ENCODE measurements at regions of chr5 and their contacts with region 1.

Region 1: DNA sequence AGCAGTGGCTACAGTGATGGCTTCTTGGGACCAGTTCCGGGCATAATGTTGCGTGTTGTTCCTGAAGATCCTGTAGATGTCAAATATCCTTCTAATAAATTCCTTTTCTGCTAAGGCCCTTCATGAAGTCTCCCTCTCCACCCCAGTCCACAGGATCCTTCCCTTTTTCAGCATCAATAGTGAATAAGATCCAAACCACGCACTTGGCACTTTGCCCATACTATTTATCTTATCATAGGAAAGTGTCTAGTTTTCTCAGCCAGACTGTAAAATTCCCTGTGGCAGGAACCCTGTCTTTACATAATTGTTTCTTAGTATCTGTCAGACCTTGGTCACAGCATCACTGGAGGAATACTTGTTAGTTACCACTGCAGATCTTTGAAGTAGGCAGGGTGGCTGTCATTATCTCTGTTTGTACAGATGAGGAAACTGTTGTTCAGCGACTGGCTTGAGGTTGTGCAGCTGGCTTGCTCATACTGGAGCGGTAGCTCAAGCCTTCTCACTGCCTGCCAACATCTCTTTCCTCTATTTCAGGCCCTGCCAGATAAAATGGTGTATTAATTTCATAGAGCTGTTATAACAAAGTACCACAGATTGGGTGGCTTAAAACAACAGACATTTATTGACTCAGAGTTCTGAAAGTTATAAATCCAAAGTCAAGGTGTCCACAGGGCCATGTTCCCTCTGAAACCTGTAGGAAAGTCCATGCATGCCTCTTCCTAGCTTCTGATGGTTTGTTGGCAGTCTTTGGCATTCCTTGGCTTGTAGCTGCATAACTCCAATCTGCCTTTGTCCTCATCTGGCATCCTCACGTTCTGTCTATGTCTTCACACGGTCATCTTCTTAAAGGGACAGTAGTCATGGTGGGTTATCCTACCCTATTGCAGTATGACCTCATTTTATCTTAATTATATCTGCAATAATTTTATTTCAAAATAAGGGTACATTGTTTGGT is 33.5 kb upstream of the APC start:
- DNase-seq: no peak
- H3K4me3 ChIP-seq: no peak overlapping the region
- H3K27ac ChIP-seq: peak overlapping the region; percentile 5 to 62 (median 50)
- H3K4me1 ChIP-seq: peaks cover 5 to 31% (median 25%) of the 10 kb centered on the region in 4 donors
- H3K27me3 ChIP-seq: no peaks in the 10 kb centered on the region
- CTCF ChIP-seq: no peak
- EP300 ChIP-seq: no peak
- POLR2A ChIP-seq: no peak

Region 2: GRCh38 chr5:112594095-112594850 is 109.9 kb before region 1 on chr5:
- intact Hi-C with region 1: no loop called
- DNase-seq: peak; percentile 72
- H3K4me3 ChIP-seq: no peak overlapping the region
- H3K27ac ChIP-seq: no peak overlapping the region
- H3K4me1 ChIP-seq: peaks cover 0 to 12% (median 8%) of the 10 kb centered on the region in 4 donors
- H3K27me3 ChIP-seq: no peaks in the 10 kb centered on the region
- CTCF ChIP-seq: no peak
- EP300 ChIP-seq: no peak
- POLR2A ChIP-seq: no peak

Region 3: GRCh38 chr5:112684737-112685136 is 19.4 kb before region 1 on chr5:
- intact Hi-C with region 1: loop called (anchors 2 kb)
- DNase-seq: no peak
- H3K4me3 ChIP-seq: no peak overlapping the region
- H3K27ac ChIP-seq: peak overlapping the region; percentile 29 to 84 (median 80)
- H3K4me1 ChIP-seq: peaks cover 18 to 62% (median 48%) of the 10 kb centered on the region in 4 donors
- H3K27me3 ChIP-seq: no peaks in the 10 kb centered on the region
- CTCF ChIP-seq: no peak
- EP300 ChIP-seq: no peak
- POLR2A ChIP-seq: no peak

Region 4: GRCh38 chr5:113059232-113060040 is 355.3 kb after region 1 on chr5:
- intact Hi-C with region 1: no loop called
- DNase-seq: no peak
- H3K4me3 ChIP-seq: no peak overlapping the region
- H3K27ac ChIP-seq: no peak overlapping the region
- H3K4me1 ChIP-seq: peaks cover 6 to 21% (median 17%) of the 10 kb centered on the region in 4 donors
- H3K27me3 ChIP-seq: no peaks in the 10 kb centered on the region
- CTCF ChIP-seq: no peak
- EP300 ChIP-seq: no peak
- POLR2A ChIP-seq: no peak

Measured in esophagus muscularis mucosa (tissue), 4 donors.